Activated CD4-positive, alpha-beta T cell treated with anti-CD3 and anti-CD28 coated beads for 36 hours (primary cell): ENCODE measurements at regions of chr17 and their contacts with region 1.

Region 1: DNA sequence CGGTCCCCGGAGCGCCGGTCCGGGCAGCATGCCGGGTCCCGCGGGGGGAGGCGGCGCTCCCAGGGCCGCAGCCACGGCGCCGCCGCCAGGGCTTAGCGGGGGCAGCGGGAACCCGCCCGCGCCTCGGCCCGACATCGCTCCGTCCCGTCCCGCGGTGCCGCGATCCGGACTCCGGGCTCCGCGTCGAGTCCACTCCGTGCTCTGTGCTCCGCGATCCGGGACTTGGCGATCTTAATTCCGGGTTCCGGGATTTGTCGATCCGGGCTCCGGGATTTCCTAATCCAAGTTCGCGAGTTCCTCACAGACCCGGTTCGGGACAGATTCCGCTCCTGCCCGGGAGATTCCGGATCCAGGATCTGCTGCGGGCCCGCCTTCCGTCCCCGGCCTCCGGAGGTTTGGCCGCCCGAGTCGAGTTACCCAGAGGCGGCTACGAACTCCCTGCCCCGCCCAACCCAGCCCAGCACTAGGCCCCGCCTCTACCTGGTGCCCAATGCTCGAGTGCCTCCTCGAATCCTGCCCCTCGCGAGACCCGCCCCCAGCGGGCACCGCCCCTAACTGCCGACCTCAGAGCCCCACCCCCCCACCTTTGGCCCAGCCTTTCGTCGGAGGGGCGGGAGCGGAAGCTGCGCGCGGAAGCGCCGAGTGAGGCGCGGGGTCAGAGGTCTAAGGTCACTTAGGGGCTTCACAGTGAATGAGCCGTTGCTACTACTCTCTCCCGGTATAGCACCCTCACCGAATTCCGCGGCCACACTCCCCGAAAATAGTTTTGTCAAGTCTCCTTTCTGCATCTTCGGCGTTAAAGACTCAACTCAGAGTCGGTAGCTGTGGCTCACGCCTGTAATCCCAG is at the start of gene SMARCD2:
- DNase-seq: peak; percentile 100
- ATAC-seq: peak; percentile 89
- H3K4me3 Mint-ChIP-seq: peak within 1 kb of the TSS; percentile 98
- H3K27ac Mint-ChIP-seq: peak within 1 kb of the TSS; percentile 97
- H3K4me1 Mint-ChIP-seq: peaks cover 35% of the 10 kb centered on the region
- H3K27me3 Mint-ChIP-seq: no peaks in the 10 kb centered on the region
- total RNA-seq, gene SMARCD2: 100.0 to 101 TPM

Region 2: GRCh38 chr17:63445979-63446691 is 396.6 kb before region 1 on chr17 and contains the start of gene CYB561:
- CTCF ChIA-PET with region 1: no interaction called
- POLR2A ChIA-PET with region 1: no interaction called
- intact Hi-C with region 1: loop called in 1 of 2 experiments (anchors 5 kb)
- DNase-seq: peak; percentile 81
- ATAC-seq: peak; percentile 69
- H3K4me3 Mint-ChIP-seq: peak within 1 kb of the TSS; percentile 60
- H3K27ac Mint-ChIP-seq: peak within 1 kb of the TSS; percentile 72
- H3K4me1 Mint-ChIP-seq: peaks cover 23% of the 10 kb centered on the region
- H3K27me3 Mint-ChIP-seq: peaks cover 3% of the 10 kb centered on the region
- total RNA-seq, gene CYB561: 2.5 to 3.0 TPM

Region 3: GRCh38 chr17:63646488-63646806 is 196.3 kb before region 1 on chr17:
- CTCF ChIA-PET with region 1: no interaction called
- POLR2A ChIA-PET with region 1: no interaction called
- intact Hi-C with region 1: no loop called
- DNase-seq: no peak
- ATAC-seq: no peak
- H3K4me3 Mint-ChIP-seq: no peak overlapping the region
- H3K27ac Mint-ChIP-seq: no peak overlapping the region
- H3K4me1 Mint-ChIP-seq: peaks cover 10% of the 10 kb centered on the region
- H3K27me3 Mint-ChIP-seq: no peaks in the 10 kb centered on the region

Region 4: DNA sequence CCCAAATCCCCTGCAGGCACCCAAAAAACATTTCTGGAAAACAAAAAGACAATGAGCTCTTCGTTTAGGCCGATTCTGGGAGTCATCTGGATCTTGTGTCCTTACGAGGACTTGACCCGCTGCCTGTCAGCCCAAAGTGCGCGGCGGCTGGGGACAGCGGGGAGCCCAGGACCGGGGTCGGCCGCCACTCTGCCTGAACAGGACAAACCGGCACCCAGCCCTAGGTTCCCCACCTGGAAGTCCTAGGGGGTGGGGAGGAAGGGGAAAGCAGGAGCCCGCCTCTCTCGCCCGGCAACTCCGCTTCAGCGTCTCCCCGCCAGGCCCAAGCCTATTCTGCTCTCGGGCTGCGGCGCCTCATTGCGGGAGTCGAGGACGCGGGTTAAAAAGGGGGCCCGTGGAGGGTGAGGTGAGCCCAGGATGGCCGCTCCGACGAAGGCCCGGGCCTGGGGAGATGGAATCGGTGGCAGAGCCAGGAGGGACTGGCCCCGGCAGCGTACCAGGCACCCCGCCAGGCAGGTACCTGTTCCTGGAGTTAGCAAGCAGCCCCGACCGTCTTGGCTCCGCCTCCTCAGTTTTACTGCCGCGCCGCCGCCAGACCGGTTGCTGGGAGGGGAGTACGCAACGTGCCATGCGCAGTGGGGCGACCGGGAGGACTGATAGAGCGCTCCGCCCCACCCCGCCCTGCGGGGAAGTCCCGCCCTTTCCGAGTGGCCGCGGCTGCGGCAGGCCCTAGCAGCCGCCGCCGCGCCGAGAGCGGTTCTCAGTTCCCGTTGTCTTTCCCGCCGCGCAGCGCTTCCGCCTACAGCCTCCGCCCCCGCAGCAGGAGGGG is 101.3 kb before region 1 on chr17 and contains the start of gene STRADA:
- CTCF ChIA-PET with region 1: interaction called, 3 read pairs
- POLR2A ChIA-PET with region 1: no interaction called
- intact Hi-C with region 1: loop called (anchors 1 kb)
- DNase-seq: peak; percentile 100
- ATAC-seq: peak; percentile 94
- H3K4me3 Mint-ChIP-seq: peak within 1 kb of the TSS; percentile 91
- H3K27ac Mint-ChIP-seq: peak within 1 kb of the TSS; percentile 95
- H3K4me1 Mint-ChIP-seq: peaks cover 29% of the 10 kb centered on the region
- H3K27me3 Mint-ChIP-seq: no peaks in the 10 kb centered on the region
- total RNA-seq, gene STRADA: 51.0 to 53.6 TPM

Region 5: GRCh38 chr17:63859257-63859656 is 16.5 kb after region 1 on chr17:
- CTCF ChIA-PET with region 1: interaction called, 19 read pairs
- POLR2A ChIA-PET with region 1: no interaction called
- intact Hi-C with region 1: no loop called
- DNase-seq: no peak
- ATAC-seq: no peak
- H3K4me3 Mint-ChIP-seq: no peak overlapping the region
- H3K27ac Mint-ChIP-seq: no peak overlapping the region
- H3K4me1 Mint-ChIP-seq: no peaks in the 10 kb centered on the region
- H3K27me3 Mint-ChIP-seq: no peaks in the 10 kb centered on the region

Region 6: GRCh38 chr17:64240741-64241347 is 398.1 kb after region 1 on chr17:
- CTCF ChIA-PET with region 1: no interaction called
- POLR2A ChIA-PET with region 1: interaction called, 10 read pairs
- intact Hi-C with region 1: no loop called
- DNase-seq: no peak
- ATAC-seq: no peak
- H3K4me3 Mint-ChIP-seq: no peak overlapping the region
- H3K27ac Mint-ChIP-seq: no peak overlapping the region
- H3K4me1 Mint-ChIP-seq: peaks cover 45% of the 10 kb centered on the region
- H3K27me3 Mint-ChIP-seq: no peaks in the 10 kb centered on the region

Region 7: GRCh38 chr17:64661976-64662773 is 819.4 kb after region 1 on chr17 and contains the start of gene SMURF2:
- CTCF ChIA-PET with region 1: no interaction called
- POLR2A ChIA-PET with region 1: no interaction called
- intact Hi-C with region 1: loop called in 1 of 2 experiments (anchors 2 kb)
- DNase-seq: peak; percentile 89
- ATAC-seq: peak; percentile 82
- H3K4me3 Mint-ChIP-seq: peak within 1 kb of the TSS; percentile 98
- H3K27ac Mint-ChIP-seq: peak within 1 kb of the TSS; percentile 92
- H3K4me1 Mint-ChIP-seq: peaks cover 27% of the 10 kb centered on the region
- H3K27me3 Mint-ChIP-seq: no peaks in the 10 kb centered on the region
- total RNA-seq, gene SMURF2: 13.9 to 15.0 TPM